ENCODE measurements at regions of chr11 and their contacts with region 1.

Region 1: GRCh38 chr11:122796128-122796717 is 42.1 kb upstream of the CRTAM start:
- DNase-seq: peak; percentile 43
- H3K4me3 ChIP-seq: no peak overlapping the region
- H3K27ac ChIP-seq: no peak overlapping the region
- H3K4me1 ChIP-seq: peaks cover 0 to 8% of the 10 kb centered on the region in 2 experiments; a peak in 2 of 4 replicates
- H3K27me3 ChIP-seq: no peaks in the 10 kb centered on the region
- CTCF ChIP-seq: peak; percentile 81
- EP300 ChIP-seq: no peak
- RAD21 ChIP-seq: peak; percentile 63

Region 2: GRCh38 chr11:122383186-122383585 is 413.0 kb before region 1 on chr11:
- CTCF ChIA-PET with region 1: no interaction called
- POLR2A ChIA-PET with region 1: no interaction called
- DNase-seq: no peak
- H3K4me3 ChIP-seq: no peak overlapping the region
- H3K27ac ChIP-seq: no peak overlapping the region
- H3K4me1 ChIP-seq: no peaks in the 10 kb centered on the region
- H3K27me3 ChIP-seq: no peaks in the 10 kb centered on the region
- CTCF ChIP-seq: no peak
- EP300 ChIP-seq: no peak
- RAD21 ChIP-seq: no peak

Region 3: DNA sequence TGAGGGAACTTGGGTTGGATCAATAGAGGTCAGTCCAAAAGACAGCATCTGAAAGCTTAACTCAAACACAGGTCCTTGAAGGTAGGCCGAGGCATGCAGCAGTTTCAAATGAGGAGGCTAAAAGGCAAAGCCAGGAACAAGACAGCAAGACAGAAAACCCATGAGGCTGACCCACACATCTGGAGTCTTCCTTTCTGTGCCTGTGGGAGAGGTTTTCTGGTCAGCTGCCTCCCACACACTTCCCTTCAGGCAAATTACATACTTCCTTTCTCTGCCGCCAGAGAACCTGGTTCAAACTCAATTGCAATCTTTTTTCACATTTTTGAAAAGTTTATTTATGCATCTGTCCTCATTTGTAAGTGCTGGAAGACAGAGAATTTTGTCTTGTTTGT is 12.3 kb after region 1 on chr11:
- CTCF ChIA-PET with region 1: interaction called, 26 read pairs
- POLR2A ChIA-PET with region 1: no interaction called
- DNase-seq: no peak
- H3K4me3 ChIP-seq: no peak overlapping the region
- H3K27ac ChIP-seq: peak overlapping the region in 1 of 2 experiments; percentile 43; a peak in 2 of 4 replicates
- H3K4me1 ChIP-seq: peaks cover 4 to 14% of the 10 kb centered on the region in 2 experiments
- H3K27me3 ChIP-seq: no peaks in the 10 kb centered on the region
- CTCF ChIP-seq: no peak
- EP300 ChIP-seq: no peak
- RAD21 ChIP-seq: no peak

Measured in SK-N-SH (cell line).